HepG2 (cell line): ENCODE measurements at regions of chr7 and their contacts with region 1.

Region 1: GRCh38 chr7:127504715-127505114 is 80.7 kb downstream of the GCC1 start:
- DNase-seq: peak; percentile 22
- ATAC-seq: peak; percentile 84
- H3K4me3 ChIP-seq: no peak overlapping the region
- H3K27ac ChIP-seq: no peak overlapping the region
- H3K4me1 ChIP-seq: no peaks in the 10 kb centered on the region
- H3K27me3 ChIP-seq: no peaks in the 10 kb centered on the region; a peak in 1 of 5 replicates
- CTCF ChIP-seq: peak; percentile 67
- EP300 ChIP-seq: no peak
- POLR2A ChIP-seq: no peak
- RAD21 ChIP-seq: no peak

Region 2: GRCh38 chr7:127578036-127578684 is 73.4 kb after region 1 on chr7:
- CTCF ChIA-PET with region 1: no interaction called
- POLR2A ChIA-PET with region 1: no interaction called
- in situ Hi-C with region 1: no loop called
- intact Hi-C with region 1: loop called (anchors 2 kb)
- DNase-seq: peak; percentile 20
- ATAC-seq: 0 out of 3 replicates have a peak, but pooled peaks have one; percentile 14
- H3K4me3 ChIP-seq: no peak overlapping the region
- H3K27ac ChIP-seq: no peak overlapping the region
- H3K4me1 ChIP-seq: peaks cover 30% of the 10 kb centered on the region
- H3K27me3 ChIP-seq: no peaks in the 10 kb centered on the region
- CTCF ChIP-seq: peak; percentile 41
- EP300 ChIP-seq: no peak
- POLR2A ChIP-seq: no peak
- RAD21 ChIP-seq: no peak

Region 3: DNA sequence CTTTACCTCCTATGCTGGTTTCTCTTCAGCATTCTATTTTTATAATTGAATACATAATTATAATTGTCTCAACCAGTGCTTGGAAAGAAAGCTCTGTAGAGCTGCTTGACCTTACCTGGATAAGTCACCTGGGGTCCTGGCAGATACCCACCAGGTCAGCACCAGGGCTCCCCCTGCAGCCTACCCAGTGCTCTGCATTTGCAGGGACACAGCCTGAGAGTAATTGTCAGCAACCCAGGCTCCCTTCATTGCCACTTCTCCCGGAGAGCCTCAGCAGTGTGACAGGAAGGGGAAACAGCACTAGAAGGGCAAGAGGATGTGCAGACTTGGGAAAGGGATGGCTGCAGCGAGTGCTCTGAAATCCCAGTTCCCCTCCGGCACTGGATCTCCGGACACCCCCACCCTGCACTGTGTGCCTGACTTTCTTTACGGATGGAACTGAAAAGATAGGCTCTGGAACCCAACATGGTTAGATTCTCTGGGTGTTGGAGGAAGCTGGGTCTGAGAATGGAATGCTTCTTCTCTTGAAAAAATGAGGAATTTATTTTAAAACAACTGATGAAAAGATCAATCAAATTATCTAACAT is 124.6 kb after region 1 on chr7:
- CTCF ChIA-PET with region 1: interaction called, 7 read pairs
- POLR2A ChIA-PET with region 1: no interaction called
- in situ Hi-C with region 1: no loop called
- intact Hi-C with region 1: loop called (anchors 1 kb)
- DNase-seq: peak; percentile 33
- ATAC-seq: peak; percentile 98
- H3K4me3 ChIP-seq: peak overlapping the region in 1 of 3 experiments; percentile 26; a peak in 1 of 6 replicates
- H3K27ac ChIP-seq: no peak overlapping the region
- H3K4me1 ChIP-seq: no peaks in the 10 kb centered on the region
- H3K27me3 ChIP-seq: no peaks in the 10 kb centered on the region; a peak in 1 of 5 replicates
- CTCF ChIP-seq: peak; percentile 88
- EP300 ChIP-seq: no peak
- POLR2A ChIP-seq: no peak
- RAD21 ChIP-seq: peak; percentile 52